IMR-90 (cell line): ENCODE measurements at regions of chr2 and their contacts with region 1.

Region 1: GRCh38 chr2:36800381-36800780 is 103.9 kb downstream of the VIT start:
- DNase-seq: no peak
- ATAC-seq: no peak
- H3K4me3 ChIP-seq: no peak overlapping the region
- H3K27ac ChIP-seq: no peak overlapping the region
- H3K4me1 ChIP-seq: no peaks in the 10 kb centered on the region
- H3K27me3 ChIP-seq: peaks cover 28% of the 10 kb centered on the region
- CTCF ChIP-seq: no peak
- POLR2A ChIP-seq: no peak
- RAD21 ChIP-seq: no peak

Region 2: DNA sequence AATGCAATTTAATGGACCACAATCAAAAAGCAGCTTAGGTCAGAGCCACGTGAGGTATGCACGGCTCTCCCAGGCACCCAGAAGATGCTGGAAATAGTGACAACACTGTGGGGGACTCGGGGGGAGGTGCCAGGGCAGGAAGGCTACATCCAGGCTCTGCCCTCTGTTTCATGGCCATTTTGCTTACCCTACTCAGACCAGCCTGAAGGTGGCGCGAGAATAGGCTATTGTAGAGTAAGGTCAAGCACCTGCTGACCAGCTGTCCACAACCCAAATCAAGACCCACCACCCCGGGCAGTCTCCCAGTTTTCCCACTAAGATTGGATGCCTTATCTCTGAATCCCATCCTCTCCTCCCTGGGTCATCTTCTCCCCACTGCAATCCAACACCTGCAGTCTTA is 11.8 kb after region 1 on chr2:
- CTCF ChIA-PET with region 1: no interaction called
- POLR2A ChIA-PET with region 1: interaction called, 14 read pairs
- dilution Hi-C with region 1: no loop called
- in situ Hi-C with region 1: no loop called
- intact Hi-C with region 1: no loop called
- DNase-seq: no peak
- ATAC-seq: no peak
- H3K4me3 ChIP-seq: no peak overlapping the region
- H3K27ac ChIP-seq: no peak overlapping the region
- H3K4me1 ChIP-seq: no peaks in the 10 kb centered on the region
- H3K27me3 ChIP-seq: no peaks in the 10 kb centered on the region; the same call in 1 of the 2 replicates
- CTCF ChIP-seq: 0 out of 2 replicates have a peak, but pooled peaks have one; percentile 9
- POLR2A ChIP-seq: no peak
- RAD21 ChIP-seq: no peak

Region 3: GRCh38 chr2:36973320-36973719 is 172.9 kb after region 1 on chr2:
- CTCF ChIA-PET with region 1: no interaction called
- POLR2A ChIA-PET with region 1: interaction called, 10 read pairs
- dilution Hi-C with region 1: no loop called
- in situ Hi-C with region 1: no loop called
- intact Hi-C with region 1: no loop called
- DNase-seq: no peak
- ATAC-seq: no peak
- H3K4me3 ChIP-seq: no peak overlapping the region
- H3K27ac ChIP-seq: no peak overlapping the region
- H3K4me1 ChIP-seq: no peaks in the 10 kb centered on the region
- H3K27me3 ChIP-seq: no peaks in the 10 kb centered on the region
- CTCF ChIP-seq: no peak
- POLR2A ChIP-seq: no peak
- RAD21 ChIP-seq: no peak